Heart left ventricle (tissue), 16 donors: ENCODE measurements at regions of chr4 and their contacts with region 1.

Region 1: GRCh38 chr4:19386786-19387185 is 864.9 kb upstream of the SLIT2 start:
- DNase-seq: no peak
- ATAC-seq: no peak
- H3K4me3 ChIP-seq: no peak overlapping the region
- H3K27ac ChIP-seq: no peak overlapping the region
- H3K4me1 ChIP-seq: no peaks in the 10 kb centered on the region
- H3K27me3 ChIP-seq: no peaks in the 10 kb centered on the region
- CTCF ChIP-seq: no peak
- POLR2A ChIP-seq: no peak

Region 2: DNA sequence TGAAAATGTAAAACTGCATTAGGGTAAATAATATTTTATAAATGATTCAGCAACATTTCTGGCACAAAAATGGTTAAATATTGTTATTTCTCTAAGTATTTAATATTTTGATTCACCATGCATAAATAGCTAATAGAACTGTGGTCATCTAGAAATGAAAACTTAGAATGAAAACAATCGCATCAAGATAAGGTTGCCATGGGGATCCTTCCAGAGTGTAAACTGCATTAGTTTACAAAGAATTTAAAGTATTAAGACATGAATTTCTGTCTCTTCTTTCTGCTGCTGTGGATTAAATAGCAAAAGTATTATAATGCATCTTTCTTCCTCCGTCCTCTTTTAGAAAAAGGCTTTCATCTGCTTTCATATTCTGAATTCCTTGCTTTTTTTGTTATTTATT is 199.7 kb before region 1 on chr4:
- intact Hi-C with region 1: no loop called
- DNase-seq: no peak
- ATAC-seq: no peak
- H3K4me3 ChIP-seq: no peak overlapping the region
- H3K27ac ChIP-seq: no peak overlapping the region
- H3K4me1 ChIP-seq: no peaks in the 10 kb centered on the region
- H3K27me3 ChIP-seq: no peaks in the 10 kb centered on the region
- CTCF ChIP-seq: no peak
- POLR2A ChIP-seq: no peak

Region 3: GRCh38 chr4:19298998-19299397 is 87.8 kb before region 1 on chr4:
- intact Hi-C with region 1: no loop called
- DNase-seq: no peak
- ATAC-seq: no peak
- H3K4me3 ChIP-seq: no peak overlapping the region
- H3K27ac ChIP-seq: no peak overlapping the region
- H3K4me1 ChIP-seq: no peaks in the 10 kb centered on the region
- H3K27me3 ChIP-seq: no peaks in the 10 kb centered on the region
- CTCF ChIP-seq: no peak
- POLR2A ChIP-seq: no peak

Region 4: DNA sequence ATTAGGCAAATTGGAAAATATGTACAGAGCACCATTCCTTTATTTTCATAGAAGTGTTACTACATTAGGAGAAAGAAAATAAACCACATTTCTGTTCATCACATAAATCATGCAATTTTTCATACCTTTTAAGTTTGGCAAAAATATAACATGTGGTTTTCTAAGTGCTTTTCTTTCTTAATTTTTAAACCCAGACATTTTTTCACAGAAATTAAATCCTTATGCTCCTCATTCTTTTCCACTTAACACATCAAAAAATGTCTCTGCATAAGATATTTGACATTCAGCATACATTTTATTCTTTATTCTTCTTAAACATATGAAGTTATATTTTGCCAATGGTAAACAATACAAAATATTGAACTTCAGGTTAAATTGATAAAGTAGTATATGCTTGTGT is 38.4 kb after region 1 on chr4:
- intact Hi-C with region 1: loop called in 1 of 10 experiments (anchors 2 kb)
- DNase-seq: no peak
- ATAC-seq: no peak
- H3K4me3 ChIP-seq: no peak overlapping the region
- H3K27ac ChIP-seq: no peak overlapping the region
- H3K4me1 ChIP-seq: no peaks in the 10 kb centered on the region
- H3K27me3 ChIP-seq: no peaks in the 10 kb centered on the region
- CTCF ChIP-seq: no peak
- POLR2A ChIP-seq: no peak